ENCODE measurements at regions of chr17 and their contacts with region 1.

Region 1: GRCh38 chr17:40086150-40087044 is 14.0 kb downstream of the NR1D1 start:
- DNase-seq: peak; percentile 58 to 79 (median 75)
- H3K4me3 ChIP-seq: no peak overlapping the region
- H3K27ac ChIP-seq: no peak overlapping the region
- H3K4me1 ChIP-seq: no peaks in the 10 kb centered on the region
- H3K27me3 ChIP-seq: no peaks in the 10 kb centered on the region

Region 2: GRCh38 chr17:39939588-39940419 is 146.6 kb before region 1 on chr17:
- CTCF ChIA-PET with region 1: no interaction called
- POLR2A ChIA-PET with region 1: no interaction called
- DNase-seq: peak; percentile 50 to 83 (median 77)
- H3K4me3 ChIP-seq: no peak overlapping the region
- H3K27ac ChIP-seq: no peak overlapping the region
- H3K4me1 ChIP-seq: peaks cover 0 to 9% (median 6%) of the 10 kb centered on the region in 4 experiments
- H3K27me3 ChIP-seq: no peaks in the 10 kb centered on the region

Region 3: GRCh38 chr17:39980351-39981206 is 105.8 kb before region 1 on chr17 and contains the start of gene PSMD3:
- CTCF ChIA-PET with region 1: no interaction called
- POLR2A ChIA-PET with region 1: no interaction called
- DNase-seq: peak; percentile 100
- H3K4me3 ChIP-seq: peak within 1 kb of the TSS; percentile 68 to 99 (median 88)
- H3K27ac ChIP-seq: peak within 1 kb of the TSS; percentile 93 to 96
- H3K4me1 ChIP-seq: peaks cover 18 to 29% (median 23%) of the 10 kb centered on the region in 4 experiments
- H3K27me3 ChIP-seq: peaks cover 0 to 4% (median 0%) of the 10 kb centered on the region in 5 experiments

Region 4: GRCh38 chr17:40015005-40015997 is 71.1 kb before region 1 on chr17 and contains the start of gene CSF3:
- CTCF ChIA-PET with region 1: interaction called, 16 read pairs
- POLR2A ChIA-PET with region 1: no interaction called
- DNase-seq: peak in 2 of 3 donors; percentile 23 to 26
- H3K4me3 ChIP-seq: peak within 1 kb of the TSS in 1 of 7 experiments; percentile 0
- H3K27ac ChIP-seq: no peak within 1 kb of the TSS
- H3K4me1 ChIP-seq: peaks cover 0 to 13% (median 9%) of the 10 kb centered on the region in 4 experiments
- H3K27me3 ChIP-seq: no peaks in the 10 kb centered on the region

Region 5: DNA sequence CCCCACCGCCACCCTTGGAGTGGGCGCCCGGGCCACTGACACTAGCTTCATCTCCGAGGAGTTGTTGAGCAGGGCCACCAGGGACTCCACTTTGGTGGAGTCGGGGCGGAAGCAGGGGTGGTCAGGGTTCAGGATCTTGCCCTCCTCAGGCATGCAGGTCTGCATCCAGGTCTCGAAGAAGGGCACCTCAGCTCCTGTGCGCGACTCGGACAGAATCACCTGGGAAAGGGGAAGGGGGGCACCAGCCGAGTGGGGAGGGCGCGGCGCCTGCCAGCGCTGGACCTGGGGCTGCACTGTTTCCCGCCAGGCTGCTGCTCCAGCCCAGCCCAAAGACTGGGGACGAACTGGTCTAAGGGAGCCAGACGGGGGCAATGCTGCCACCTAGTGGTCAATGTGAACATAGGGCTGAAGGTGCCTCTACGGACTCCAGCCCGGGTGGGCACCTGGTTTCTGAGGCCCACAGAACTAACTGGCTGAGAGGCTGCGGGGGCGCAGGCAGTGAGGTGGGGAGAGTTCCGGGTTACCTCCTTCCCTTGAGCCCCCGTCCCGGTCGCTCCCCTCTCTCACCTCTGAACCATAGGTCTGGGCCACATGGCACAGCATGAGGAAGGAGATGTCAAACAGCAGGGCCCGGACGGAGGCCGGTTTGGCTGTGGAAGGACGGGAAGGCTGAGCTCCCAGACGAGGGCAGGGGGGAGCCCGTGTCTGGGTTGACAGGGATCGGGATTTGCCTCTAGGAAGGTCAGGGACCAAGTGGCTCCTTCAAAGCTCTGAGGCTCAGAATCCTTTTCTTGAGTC is 59.4 kb before region 1 on chr17:
- CTCF ChIA-PET with region 1: interaction called, 18 read pairs
- POLR2A ChIA-PET with region 1: no interaction called
- DNase-seq: peak; percentile 67 to 83 (median 75)
- H3K4me3 ChIP-seq: no peak overlapping the region
- H3K27ac ChIP-seq: no peak overlapping the region
- H3K4me1 ChIP-seq: peaks cover 0 to 6% (median 0%) of the 10 kb centered on the region in 4 experiments
- H3K27me3 ChIP-seq: no peaks in the 10 kb centered on the region

Region 6: GRCh38 chr17:40062329-40063186 is 23.8 kb before region 1 on chr17 and contains the start of gene THRA:
- CTCF ChIA-PET with region 1: interaction called, 49 read pairs
- POLR2A ChIA-PET with region 1: no interaction called
- DNase-seq: peak in 2 of 3 donors; percentile 72 to 79
- H3K4me3 ChIP-seq: peak within 1 kb of the TSS; percentile 71 to 96 (median 90)
- H3K27ac ChIP-seq: peak within 1 kb of the TSS in 1 of 2 experiments; percentile 69
- H3K4me1 ChIP-seq: peaks cover 8 to 40% (median 37%) of the 10 kb centered on the region in 4 experiments
- H3K27me3 ChIP-seq: peaks cover 0 to 5% (median 0%) of the 10 kb centered on the region in 5 experiments

Region 7: DNA sequence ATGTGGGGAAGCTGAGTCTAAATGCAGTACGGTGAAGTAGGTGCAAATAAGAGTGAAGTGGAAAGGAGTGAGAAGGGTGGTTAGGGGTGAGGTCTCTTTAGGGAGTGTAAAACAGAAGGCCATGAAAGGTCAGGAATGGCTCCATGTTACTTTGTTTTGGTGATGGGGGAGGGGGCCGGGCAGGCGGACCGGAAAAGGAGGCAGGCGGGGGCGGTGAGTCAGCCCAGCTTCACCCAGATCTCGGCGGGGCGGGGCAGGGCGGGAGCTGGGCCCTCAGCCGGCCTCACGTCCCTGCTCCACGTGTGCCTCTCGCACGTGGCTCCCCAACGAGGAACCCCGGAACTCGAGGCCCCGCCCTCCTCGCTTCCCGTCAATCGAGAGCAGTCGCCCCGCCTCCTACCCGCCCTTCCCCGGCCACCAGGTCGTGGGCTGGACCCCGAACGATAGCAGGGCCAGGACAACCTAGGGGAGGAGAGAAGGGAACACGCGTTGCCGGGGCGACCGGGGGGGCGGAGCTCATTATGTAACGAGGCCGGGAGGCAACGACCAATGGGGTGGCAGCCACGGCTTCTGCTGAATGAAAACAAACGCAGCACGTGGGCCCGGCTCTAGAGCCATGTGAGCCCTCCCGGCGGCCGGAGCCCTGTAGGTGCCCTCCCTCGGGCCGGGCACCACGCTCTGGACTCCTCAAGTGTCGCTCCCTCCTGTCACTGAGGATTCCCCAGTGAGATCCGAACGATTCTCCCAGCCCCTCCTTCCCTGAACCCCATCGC is 12.6 kb after region 1 on chr17:
- CTCF ChIA-PET with region 1: interaction called, 13 read pairs
- POLR2A ChIA-PET with region 1: no interaction called
- DNase-seq: peak; percentile 90 to 95 (median 94)
- H3K4me3 ChIP-seq: peak overlapping the region in 6 of 7 experiments; percentile 40 to 87 (median 72)
- H3K27ac ChIP-seq: peak overlapping the region; percentile 9 to 78
- H3K4me1 ChIP-seq: peaks cover 8 to 69% (median 58%) of the 10 kb centered on the region in 4 experiments
- H3K27me3 ChIP-seq: no peaks in the 10 kb centered on the region

Measured in common myeloid progenitor, CD34-positive (primary cell).